SK-N-SH (cell line): ENCODE measurements at regions of chr12 and their contacts with region 1.

Region 1: DNA sequence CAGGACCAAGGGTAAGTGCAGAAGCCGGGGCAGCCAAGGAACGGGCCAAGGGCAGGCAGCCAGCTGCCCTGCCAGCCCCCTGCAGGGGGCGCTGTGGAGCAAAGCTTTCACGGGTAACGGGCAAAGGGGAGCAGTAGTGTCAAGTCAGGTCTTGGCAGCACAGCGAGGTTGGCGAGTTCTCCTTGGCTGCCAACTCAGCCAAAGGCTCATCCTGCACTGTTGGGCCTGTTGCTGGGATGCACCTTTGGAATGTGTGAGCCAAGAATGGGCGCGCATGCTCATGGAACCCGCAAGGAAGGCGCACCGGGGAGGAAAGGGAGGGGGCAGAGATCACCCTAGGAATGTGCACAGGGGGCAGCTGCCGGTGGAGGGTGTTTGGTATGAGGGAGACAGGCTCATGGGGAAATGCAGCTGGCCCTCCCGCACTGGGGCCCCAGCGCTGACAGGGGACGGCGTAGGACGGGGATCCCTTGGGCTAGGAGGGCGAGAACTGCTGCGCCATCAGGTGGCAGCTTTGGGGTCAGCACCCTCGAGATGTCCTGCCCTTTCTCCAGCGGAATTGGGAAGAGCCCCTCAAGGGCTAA is 138.0 kb downstream of the ASCL4 start:
- DNase-seq: peak; percentile 69
- H3K4me3 ChIP-seq: peak overlapping the region; percentile 34 to 50; a peak in 3 of 4 replicates
- H3K27ac ChIP-seq: no peak overlapping the region
- H3K4me1 ChIP-seq: no peaks in the 10 kb centered on the region
- H3K27me3 ChIP-seq: no peaks in the 10 kb centered on the region
- CTCF ChIP-seq: peak; percentile 61
- EP300 ChIP-seq: no peak
- RAD21 ChIP-seq: no peak

Region 2: GRCh38 chr12:107929436-107929835 is 16.9 kb after region 1 on chr12:
- CTCF ChIA-PET with region 1: interaction called, 63 read pairs
- POLR2A ChIA-PET with region 1: no interaction called
- DNase-seq: peak; percentile 42
- H3K4me3 ChIP-seq: no peak overlapping the region
- H3K27ac ChIP-seq: no peak overlapping the region
- H3K4me1 ChIP-seq: no peaks in the 10 kb centered on the region
- H3K27me3 ChIP-seq: no peaks in the 10 kb centered on the region
- CTCF ChIP-seq: peak; percentile 33
- EP300 ChIP-seq: no peak
- RAD21 ChIP-seq: peak; percentile 64

Region 3: DNA sequence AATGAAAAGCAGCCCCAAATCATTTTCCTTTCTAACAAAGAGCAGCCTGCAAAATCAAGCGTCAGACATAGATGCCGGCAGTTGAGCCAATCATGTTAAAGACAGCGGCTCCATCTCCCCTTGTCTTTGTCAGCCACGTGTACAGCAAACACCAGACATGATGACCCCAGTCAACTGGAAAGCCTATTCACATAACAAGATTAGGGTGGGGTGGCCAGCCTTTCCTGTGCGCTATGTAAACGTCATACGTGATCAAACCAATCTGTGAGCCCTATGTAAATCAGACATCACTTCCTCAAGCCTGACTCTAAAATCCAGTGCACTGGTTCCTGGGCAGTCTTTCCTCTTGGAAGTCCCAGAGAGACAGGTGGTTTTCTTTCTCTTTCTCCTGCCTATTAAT is 592.6 kb after region 1 on chr12:
- CTCF ChIA-PET with region 1: no interaction called
- POLR2A ChIA-PET with region 1: no interaction called
- DNase-seq: no peak
- H3K4me3 ChIP-seq: no peak overlapping the region
- H3K27ac ChIP-seq: no peak overlapping the region
- H3K4me1 ChIP-seq: peaks cover 0 to 7% of the 10 kb centered on the region in 2 experiments; a peak in 1 of 4 replicates
- H3K27me3 ChIP-seq: no peaks in the 10 kb centered on the region
- CTCF ChIP-seq: no peak
- EP300 ChIP-seq: no peak
- RAD21 ChIP-seq: no peak